ENCODE measurements at regions of chr15 and their contacts with region 1.

Region 1: GRCh38 chr15:98881526-98882520 is 125.8 kb downstream of the PGPEP1L start:
- DNase-seq: peak; percentile 63
- H3K4me3 Mint-ChIP-seq: no peak overlapping the region
- H3K27ac Mint-ChIP-seq: no peak overlapping the region
- H3K4me1 Mint-ChIP-seq: peaks cover 7% of the 10 kb centered on the region
- H3K27me3 Mint-ChIP-seq: no peaks in the 10 kb centered on the region

Region 2: GRCh38 chr15:98779463-98780071 is 102.3 kb before region 1 on chr15:
- intact Hi-C with region 1: loop called (anchors 1 kb)
- DNase-seq: peak; percentile 92
- H3K4me3 Mint-ChIP-seq: no peak overlapping the region
- H3K27ac Mint-ChIP-seq: no peak overlapping the region
- H3K4me1 Mint-ChIP-seq: peaks cover 23% of the 10 kb centered on the region
- H3K27me3 Mint-ChIP-seq: no peaks in the 10 kb centered on the region